ENCODE measurements at regions of chr20 and their contacts with region 1.

Region 1: GRCh38 chr20:63740627-63741354 is 1.2 kb downstream of the SLC2A4RG start:
- DNase-seq: peak; percentile 90 to 94
- ATAC-seq: peak; percentile 58 to 85
- H3K4me3 ChIP-seq: peak overlapping the region; percentile 97
- H3K27ac ChIP-seq: peak overlapping the region; percentile 93 to 96
- H3K4me1 ChIP-seq: peaks cover 17% of the 10 kb centered on the region
- CTCF ChIP-seq: no peak
- EP300 ChIP-seq: no peak
- POLR2A ChIP-seq: peak; percentile 13; the same call in 1 of the 2 replicates
- RAD21 ChIP-seq: no peak

Region 2: GRCh38 chr20:63707549-63708300 is 33.1 kb before region 1 on chr20 and contains the starts of genes ARFRP1 and ZGPAT:
- CTCF ChIA-PET with region 1: interaction called, 4 read pairs
- POLR2A ChIA-PET with region 1: interaction called, 16 read pairs
- DNase-seq: peak; percentile 64 to 87
- ATAC-seq: peak; percentile 88 to 91
- H3K4me3 ChIP-seq: peak within 1 kb of the TSS; percentile 98
- H3K27ac ChIP-seq: peak within 1 kb of the TSS; percentile 97 to 98
- H3K4me1 ChIP-seq: peaks cover 21% of the 10 kb centered on the region
- CTCF ChIP-seq: no peak
- EP300 ChIP-seq: no peak
- POLR2A ChIP-seq: peak; percentile 40
- RAD21 ChIP-seq: no peak
- polyA plus RNA-seq, gene ARFRP1: 14.1 and 25.1 TPM in 2 replicates
- polyA plus RNA-seq, gene ZGPAT: 9.2 and 9.5 TPM in 2 replicates

Region 3: DNA sequence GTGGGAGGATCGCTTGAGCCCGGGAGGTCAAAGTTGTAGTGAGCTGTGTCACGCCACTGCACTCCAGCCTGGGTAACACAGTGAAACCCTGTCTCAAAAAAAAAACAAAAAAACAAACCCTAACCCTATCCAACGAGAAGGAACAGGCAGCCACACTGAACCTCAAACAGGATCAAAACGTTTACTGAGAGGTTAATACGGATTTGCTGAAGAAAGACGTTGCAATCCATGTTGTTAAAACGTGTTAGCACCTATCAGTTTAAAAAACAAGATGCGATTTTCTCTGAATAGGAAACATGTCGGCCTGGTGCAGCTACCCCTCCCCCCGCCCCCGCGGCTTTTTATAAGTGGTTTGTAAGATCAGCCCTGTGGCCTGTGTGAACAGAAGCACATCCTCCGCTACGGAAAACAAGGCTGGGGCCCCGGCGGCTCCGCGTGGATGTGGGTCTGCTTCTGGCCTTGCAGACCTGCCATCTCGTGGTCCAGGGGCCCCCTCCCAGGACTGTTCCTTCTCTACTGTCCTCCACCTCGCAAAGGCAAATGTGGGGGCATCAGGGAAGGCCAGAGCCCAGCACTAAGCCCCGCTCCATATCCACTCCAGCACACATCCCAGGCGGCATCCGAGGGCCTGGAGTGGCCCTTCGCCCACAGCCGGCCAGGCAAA is 10.1 kb after region 1 on chr20:
- CTCF ChIA-PET with region 1: interaction called, 12 read pairs
- POLR2A ChIA-PET with region 1: interaction called, 7 read pairs
- DNase-seq: no peak
- ATAC-seq: no peak
- H3K4me3 ChIP-seq: no peak overlapping the region
- H3K27ac ChIP-seq: no peak overlapping the region
- H3K4me1 ChIP-seq: no peaks in the 10 kb centered on the region
- CTCF ChIP-seq: no peak
- EP300 ChIP-seq: no peak
- POLR2A ChIP-seq: no peak
- RAD21 ChIP-seq: no peak